Mucosa of descending colon (tissue), 3 donors: ENCODE measurements at regions of chr1 and their contacts with region 1.

Region 1: DNA sequence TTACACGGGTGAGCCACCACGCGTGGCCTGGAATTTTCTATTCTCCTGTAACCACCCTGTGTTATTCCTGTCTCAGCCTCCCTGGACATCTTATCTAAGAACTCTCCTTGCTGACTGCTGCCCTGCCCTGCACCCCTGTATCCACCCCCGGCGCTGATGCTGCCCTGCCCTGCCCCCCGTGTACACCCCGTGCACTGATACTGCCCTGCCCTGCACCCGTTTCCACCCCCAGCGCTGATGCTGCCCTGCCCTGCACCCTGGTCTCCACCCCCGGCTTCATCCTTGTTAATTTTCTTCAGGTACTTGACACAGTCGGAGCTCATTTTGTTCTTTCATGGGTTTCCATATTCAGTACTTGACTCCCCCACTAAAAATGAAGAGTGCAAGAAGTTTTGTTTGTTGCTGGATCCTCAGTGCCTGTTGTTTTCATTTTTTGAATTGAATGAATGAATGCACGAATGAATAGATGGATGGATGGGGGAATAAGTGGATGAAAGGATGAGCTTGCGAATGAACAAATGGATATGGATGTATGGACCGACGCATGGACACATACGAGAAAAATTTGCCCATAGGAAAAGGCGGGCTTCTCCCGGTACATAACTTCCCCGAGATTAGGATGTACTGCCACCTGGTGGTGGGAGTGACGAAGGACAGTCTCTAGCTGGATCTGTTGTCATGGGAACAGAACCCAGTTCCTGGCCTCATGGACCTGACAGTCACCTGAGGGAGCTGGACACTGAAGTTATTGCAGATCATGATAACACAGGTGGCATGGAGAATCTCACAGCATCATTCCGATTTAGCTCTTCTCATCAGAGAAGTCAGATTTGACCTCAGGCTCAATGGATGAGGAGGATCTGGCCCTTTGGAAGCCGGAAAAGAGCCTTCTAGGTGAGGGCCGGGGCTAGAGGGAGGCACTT is 14.9 kb downstream of the AADACL4 start:
- DNase-seq: peak in 2 of 3 donors; percentile 68 to 78
- ATAC-seq: peak; percentile 92
- H3K4me3 ChIP-seq: no peak overlapping the region
- H3K4me1 ChIP-seq: no peaks in the 10 kb centered on the region
- CTCF ChIP-seq: peak; percentile 89

Region 2: GRCh38 chr1:12275369-12275768 is 383.4 kb before region 1 on chr1:
- intact Hi-C with region 1: loop called (anchors 5 to 10 kb)
- DNase-seq: peak in 2 of 3 donors; percentile 40 to 49
- ATAC-seq: peak; percentile 48
- H3K4me3 ChIP-seq: no peak overlapping the region
- H3K4me1 ChIP-seq: no peaks in the 10 kb centered on the region
- CTCF ChIP-seq: peak; percentile 46

Region 3: GRCh38 chr1:12314333-12314903 is 344.4 kb before region 1 on chr1:
- intact Hi-C with region 1: loop called in 1 of 2 experiments (anchors 10 kb)
- DNase-seq: no peak
- ATAC-seq: no peak
- H3K4me3 ChIP-seq: no peak overlapping the region
- H3K4me1 ChIP-seq: no peaks in the 10 kb centered on the region
- CTCF ChIP-seq: no peak

Region 4: GRCh38 chr1:12344596-12345349 is 314.0 kb before region 1 on chr1:
- intact Hi-C with region 1: no loop called
- DNase-seq: peak in 1 of 3 donors; percentile 14
- ATAC-seq: no peak
- H3K4me3 ChIP-seq: no peak overlapping the region
- H3K4me1 ChIP-seq: peaks cover 34% of the 10 kb centered on the region
- CTCF ChIP-seq: no peak

Region 5: GRCh38 chr1:12434174-12434573 is 224.6 kb before region 1 on chr1:
- intact Hi-C with region 1: no loop called
- DNase-seq: no peak
- ATAC-seq: peak; percentile 56
- H3K4me3 ChIP-seq: no peak overlapping the region
- H3K4me1 ChIP-seq: peaks cover 16% of the 10 kb centered on the region
- CTCF ChIP-seq: no peak

Region 6: DNA sequence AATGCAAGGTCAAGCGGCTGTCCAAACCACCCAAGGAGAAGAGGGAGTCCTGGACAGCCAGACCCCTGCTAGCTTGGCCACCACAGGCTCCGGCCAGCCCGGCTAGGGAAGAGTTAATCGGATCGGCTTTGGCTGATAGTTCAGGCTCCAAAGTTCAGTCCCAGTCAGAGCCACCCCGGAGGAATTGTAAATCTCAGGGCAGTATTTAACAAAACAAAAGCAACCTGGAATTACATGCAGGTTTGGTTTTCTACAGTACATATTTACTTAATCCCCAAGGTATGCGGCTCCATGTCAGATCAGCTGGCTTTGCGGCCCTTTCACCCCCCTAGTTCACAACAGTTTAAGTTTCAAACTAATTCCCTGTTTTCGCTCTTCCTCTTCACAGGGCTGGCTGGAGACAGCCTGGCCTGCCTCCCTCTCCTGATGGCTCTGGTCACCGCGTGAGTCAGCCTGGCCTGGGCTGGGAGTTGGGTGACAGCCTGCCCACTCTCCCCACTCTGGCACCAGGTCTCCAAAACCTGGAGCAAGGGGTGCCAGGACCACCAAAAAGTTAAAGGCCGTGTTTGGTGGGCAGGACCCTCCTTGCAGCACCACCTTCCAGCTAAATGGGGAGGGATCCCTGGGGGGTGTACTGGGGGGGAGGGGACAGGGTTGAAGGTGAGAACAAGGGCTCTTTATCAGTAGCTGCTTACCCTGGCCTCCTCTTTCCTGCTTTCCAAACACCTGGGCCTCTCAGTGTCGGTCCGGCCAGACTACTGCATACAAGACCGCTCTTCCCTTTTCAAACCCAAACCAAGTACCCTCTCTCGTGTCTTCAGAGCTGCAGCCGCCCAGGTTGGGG is 42.7 kb before region 1 on chr1:
- intact Hi-C with region 1: no loop called
- DNase-seq: peak; percentile 73 to 80 (median 79)
- ATAC-seq: peak; percentile 44
- H3K4me3 ChIP-seq: peak overlapping the region; percentile 76
- H3K4me1 ChIP-seq: peaks cover 18% of the 10 kb centered on the region
- CTCF ChIP-seq: no peak

Region 7: DNA sequence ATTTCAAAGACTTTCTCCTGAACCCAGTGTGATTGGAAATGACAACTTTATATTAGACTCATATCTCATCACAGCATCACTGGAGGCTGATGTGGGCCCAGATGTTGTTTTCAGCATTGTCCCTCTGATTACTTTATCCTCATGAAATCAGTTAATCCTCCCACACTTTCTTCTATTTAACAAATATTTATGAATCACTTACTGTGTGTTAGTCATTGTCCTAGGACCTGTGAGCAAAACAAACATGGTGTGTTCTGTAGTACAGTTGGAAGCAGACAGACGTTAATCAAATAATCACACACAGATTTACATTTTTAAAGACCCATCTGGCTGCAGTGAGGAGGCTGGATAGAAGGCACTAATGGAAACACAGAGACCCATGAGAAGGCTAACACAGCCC is 1424.9 kb after region 1 on chr1:
- intact Hi-C with region 1: no loop called
- DNase-seq: no peak
- ATAC-seq: no peak
- H3K4me3 ChIP-seq: no peak overlapping the region
- H3K4me1 ChIP-seq: no peaks in the 10 kb centered on the region
- CTCF ChIP-seq: no peak